ENCODE measurements at regions of chr3 and their contacts with region 1.

Region 1: DNA sequence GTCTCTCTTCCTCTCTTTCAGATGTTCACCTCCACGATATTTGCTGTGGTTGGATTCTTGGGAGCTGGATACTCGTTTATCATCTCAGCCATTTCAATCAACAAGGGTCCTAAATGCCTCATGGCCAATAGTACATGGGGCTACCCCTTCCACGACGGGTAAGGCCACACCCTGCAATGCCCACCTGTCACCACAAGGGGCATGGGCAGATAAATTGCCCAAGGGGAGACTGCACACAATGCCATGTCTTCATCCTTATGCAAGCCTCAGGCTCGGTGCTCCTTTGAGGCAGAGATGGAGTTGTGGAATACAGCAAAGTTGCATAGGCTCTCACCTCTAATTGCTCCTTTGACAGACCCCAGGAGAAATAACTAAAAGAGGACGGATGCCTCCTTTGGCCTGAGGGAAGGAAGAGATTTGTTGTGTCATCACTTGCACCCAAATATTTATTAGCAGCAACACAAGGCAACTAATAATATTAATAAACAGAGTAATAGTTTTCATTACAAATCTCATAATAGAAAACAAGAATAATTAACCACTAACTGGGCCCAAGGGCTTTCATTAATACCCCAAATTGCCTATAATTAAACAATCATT is 13.2 kb downstream of the TM4SF4 start:
- DNase-seq: no peak
- ATAC-seq: peak; percentile 78
- H3K4me3 ChIP-seq: no peak overlapping the region
- H3K27ac ChIP-seq: no peak overlapping the region
- H3K4me1 ChIP-seq: peaks cover 12% of the 10 kb centered on the region
- H3K27me3 ChIP-seq: no peaks in the 10 kb centered on the region
- CTCF ChIP-seq: peak; percentile 51
- EP300 ChIP-seq: no peak
- POLR2A ChIP-seq: no peak
- RAD21 ChIP-seq: no peak

Region 2: GRCh38 chr3:149393345-149394160 is 94.1 kb before region 1 on chr3:
- CTCF ChIA-PET with region 1: interaction called, 8 read pairs
- POLR2A ChIA-PET with region 1: no interaction called
- in situ Hi-C with region 1: no loop called
- intact Hi-C with region 1: loop called (anchors 2 kb)
- DNase-seq: peak; percentile 81
- ATAC-seq: peak; percentile 86
- H3K4me3 ChIP-seq: no peak overlapping the region
- H3K27ac ChIP-seq: no peak overlapping the region
- H3K4me1 ChIP-seq: peaks cover 98% of the 10 kb centered on the region
- H3K27me3 ChIP-seq: no peaks in the 10 kb centered on the region
- CTCF ChIP-seq: peak; percentile 86
- EP300 ChIP-seq: no peak
- POLR2A ChIP-seq: no peak
- RAD21 ChIP-seq: peak; percentile 94

Region 3: GRCh38 chr3:149609595-149609994 is 121.9 kb after region 1 on chr3:
- CTCF ChIA-PET with region 1: no interaction called
- POLR2A ChIA-PET with region 1: no interaction called
- in situ Hi-C with region 1: no loop called
- intact Hi-C with region 1: no loop called
- DNase-seq: peak; percentile 95
- ATAC-seq: peak; percentile 85
- H3K4me3 ChIP-seq: peak overlapping the region in 1 of 3 experiments; percentile 30; a peak in 1 of 6 replicates
- H3K27ac ChIP-seq: peak overlapping the region; percentile 89
- H3K4me1 ChIP-seq: peaks cover 100% of the 10 kb centered on the region
- H3K27me3 ChIP-seq: no peaks in the 10 kb centered on the region
- CTCF ChIP-seq: no peak
- EP300 ChIP-seq: peak in 1 of 2 experiments; percentile 91; a peak in 2 of 4 replicates
- POLR2A ChIP-seq: no peak
- RAD21 ChIP-seq: no peak

Measured in HepG2 (cell line).